ENCODE measurements at regions of chrX and their contacts with region 1.

Region 1: DNA sequence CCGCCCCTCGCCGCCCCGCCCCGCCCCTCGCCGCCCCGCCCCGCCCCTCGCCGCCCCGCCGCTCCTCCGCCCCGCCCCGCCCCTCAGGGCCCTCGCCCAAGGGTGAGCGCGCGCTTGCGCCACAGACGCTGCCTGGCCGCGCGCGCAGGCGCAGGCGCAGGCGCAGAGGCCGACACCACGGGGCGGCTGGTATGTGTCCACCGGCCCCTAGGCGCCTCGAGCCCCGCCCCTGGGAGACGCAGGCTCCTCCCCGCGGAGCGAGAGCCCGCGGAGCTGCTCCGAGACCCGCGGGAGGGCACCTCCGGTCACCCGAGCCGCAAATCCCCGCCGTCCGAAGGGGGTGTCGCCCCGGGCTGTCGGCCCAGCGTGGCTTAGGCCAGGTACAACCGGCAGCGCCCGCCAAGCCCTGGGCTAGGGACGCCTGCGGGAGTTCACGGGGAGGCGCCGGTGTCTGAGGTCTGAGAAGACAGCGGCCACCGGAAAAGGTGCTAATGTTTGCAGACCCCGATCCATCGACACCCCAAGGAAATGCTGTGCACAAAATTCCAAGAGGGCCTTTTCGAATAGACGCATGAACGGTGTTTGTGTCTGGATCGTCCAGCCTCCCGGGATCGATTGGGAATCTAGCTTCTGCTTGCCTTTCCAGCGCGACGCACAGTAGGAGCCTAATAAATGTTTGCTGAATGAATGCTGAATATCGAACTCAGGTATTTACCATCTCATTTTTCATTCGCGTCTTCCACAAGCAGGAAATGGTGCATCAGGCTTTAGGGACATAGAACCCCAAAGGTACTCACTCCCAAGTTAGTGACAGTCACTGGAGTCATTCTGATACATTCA is 473 bp upstream of the CCNQ start:
- DNase-seq: peak; percentile 75 to 89
- ATAC-seq: peak; percentile 76 to 86
- H3K4me3 ChIP-seq: peak overlapping the region; percentile 55 to 65 (median 64)
- H3K27ac ChIP-seq: peak overlapping the region; percentile 73 to 82 (median 80)
- H3K4me1 ChIP-seq: peaks cover 5 to 15% of the 10 kb centered on the region in 2 donors
- H3K27me3 ChIP-seq: no peaks in the 10 kb centered on the region
- CTCF ChIP-seq: no peak
- POLR2A ChIP-seq: no peak

Region 2: DNA sequence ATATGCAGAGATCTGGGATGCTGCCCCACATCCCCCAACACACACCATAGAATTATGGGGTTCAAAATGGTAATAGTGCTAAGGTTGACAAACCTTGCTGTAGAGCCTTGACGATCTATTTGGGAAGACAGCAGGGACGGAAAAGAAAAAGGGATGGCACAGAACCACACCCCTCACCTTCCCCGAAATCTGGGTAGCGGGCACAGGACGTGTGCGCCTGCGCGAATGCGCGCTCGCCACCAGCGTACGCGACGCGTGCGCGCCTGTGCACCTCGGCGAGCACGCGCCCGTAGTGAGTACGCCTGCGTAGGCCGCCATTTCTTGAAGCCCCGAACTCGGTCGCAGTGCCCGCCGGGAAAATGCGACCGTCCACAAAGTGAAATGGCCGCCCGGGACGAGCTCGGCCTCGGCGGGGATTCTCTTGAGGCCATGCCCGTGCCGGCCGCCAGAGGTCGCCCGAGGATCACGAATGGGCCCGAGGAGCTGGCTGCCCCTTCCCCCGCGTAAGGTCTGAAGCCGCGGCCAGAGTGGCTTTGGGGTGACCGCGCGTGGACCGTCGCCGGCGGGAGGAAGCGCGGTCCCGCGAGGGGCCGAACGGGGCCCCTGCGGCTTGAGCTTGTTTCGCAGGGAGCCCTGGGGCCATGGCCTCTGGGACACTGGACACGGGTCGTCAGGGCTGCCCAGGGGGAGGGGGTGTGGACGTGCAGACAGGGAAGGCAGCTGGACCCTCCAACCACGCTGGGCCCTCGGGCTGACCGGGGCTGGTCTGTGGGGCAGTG is 657.9 kb before region 1 on chrX:
- in situ Hi-C with region 1: no loop called
- intact Hi-C with region 1: loop called (anchors 1 kb)
- DNase-seq: peak; percentile 79 to 89
- ATAC-seq: peak; percentile 96 to 97
- H3K4me3 ChIP-seq: peak overlapping the region; percentile 49 to 83 (median 60)
- H3K27ac ChIP-seq: peak overlapping the region; percentile 73 to 92 (median 84)
- H3K4me1 ChIP-seq: peaks cover 0 to 8% of the 10 kb centered on the region in 2 donors
- H3K27me3 ChIP-seq: no peaks in the 10 kb centered on the region
- CTCF ChIP-seq: peak; percentile 75 to 97 (median 85)
- POLR2A ChIP-seq: no peak

Region 3: GRCh38 chrX:153470435-153471363 is 128.7 kb before region 1 on chrX and contains the start of gene HAUS7:
- in situ Hi-C with region 1: no loop called
- intact Hi-C with region 1: loop called (anchors 1 kb)
- DNase-seq: peak; percentile 76 to 86
- ATAC-seq: peak; percentile 87 to 89
- H3K4me3 ChIP-seq: peak within 1 kb of the TSS; percentile 56 to 71 (median 61)
- H3K27ac ChIP-seq: peak within 1 kb of the TSS; percentile 66 to 81 (median 78)
- H3K4me1 ChIP-seq: peaks cover 0 to 9% of the 10 kb centered on the region in 2 donors
- H3K27me3 ChIP-seq: no peaks in the 10 kb centered on the region
- CTCF ChIP-seq: peak; percentile 37 to 69 (median 63)
- POLR2A ChIP-seq: no peak
- total RNA-seq, gene HAUS7: 10.6 to 19.8 (median 13.2) TPM

Region 4: GRCh38 chrX:153724252-153725040 is 125.0 kb after region 1 on chrX and contains the starts of genes ABCD1 and BCAP31:
- in situ Hi-C with region 1: no loop called
- intact Hi-C with region 1: loop called (anchors 5 kb)
- DNase-seq: peak; percentile 84 to 86
- ATAC-seq: peak; percentile 56 to 68
- H3K4me3 ChIP-seq: peak within 1 kb of the TSS; percentile 66 to 75 (median 66)
- H3K27ac ChIP-seq: peak within 1 kb of the TSS; percentile 89 to 95 (median 92)
- H3K4me1 ChIP-seq: peaks cover 31 to 48% of the 10 kb centered on the region in 2 donors
- H3K27me3 ChIP-seq: no peaks in the 10 kb centered on the region
- CTCF ChIP-seq: no peak
- POLR2A ChIP-seq: peak; percentile 80 to 88
- total RNA-seq, gene ABCD1: 19.9 to 54.6 (median 34.5) TPM
- total RNA-seq, gene BCAP31: 41.5 to 91.9 (median 48.3) TPM

Region 5: DNA sequence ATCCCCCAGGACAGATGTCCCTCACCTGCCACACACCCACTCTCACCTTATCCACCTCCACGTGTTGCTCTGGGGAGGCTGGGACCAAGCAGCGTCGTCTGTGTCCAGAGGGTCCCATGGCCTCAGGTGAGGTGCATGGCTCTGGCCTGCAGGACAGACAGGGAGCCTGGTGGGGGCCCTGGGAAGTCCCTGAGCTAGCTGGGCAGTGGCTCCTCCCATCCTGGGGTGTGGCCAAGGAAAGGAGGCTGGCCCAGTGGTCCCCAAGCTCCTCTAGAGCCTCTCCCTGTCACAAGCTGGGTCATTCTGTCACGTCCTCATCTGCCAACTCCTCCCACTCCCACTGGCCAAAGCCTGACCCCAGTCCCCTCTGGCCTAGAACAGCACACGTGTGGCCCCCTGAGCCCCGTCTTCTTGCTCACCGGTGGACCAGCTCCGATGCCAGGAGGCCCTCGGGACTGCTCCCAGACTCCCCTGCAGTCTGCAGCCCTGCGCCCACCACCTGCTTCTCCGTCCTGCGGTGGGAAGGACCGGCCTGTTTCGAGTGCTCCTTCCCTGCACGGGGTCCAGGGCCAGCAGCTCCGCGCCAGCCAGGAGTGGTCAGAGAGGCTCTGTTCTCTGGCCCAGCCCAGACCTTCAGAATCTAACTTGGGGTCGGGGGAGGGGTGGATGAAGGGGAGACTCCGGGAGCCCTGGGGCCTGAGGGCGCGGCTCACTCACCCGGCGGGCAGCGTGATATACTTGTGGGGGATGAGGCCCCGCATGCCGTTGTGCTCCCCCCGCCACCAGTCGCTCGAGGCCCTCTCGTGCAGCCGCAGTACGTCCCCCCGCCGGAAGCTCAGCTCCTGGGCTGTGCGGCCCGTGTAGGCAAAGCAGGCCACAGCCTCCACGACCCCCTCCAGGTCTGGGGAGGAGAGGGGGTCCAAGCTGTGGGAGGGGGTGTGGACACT is 309.9 kb after region 1 on chrX:
- in situ Hi-C with region 1: no loop called
- intact Hi-C with region 1: no loop called
- DNase-seq: no peak
- ATAC-seq: no peak
- H3K4me3 ChIP-seq: no peak overlapping the region
- H3K27ac ChIP-seq: no peak overlapping the region
- H3K4me1 ChIP-seq: no peaks in the 10 kb centered on the region
- H3K27me3 ChIP-seq: no peaks in the 10 kb centered on the region
- CTCF ChIP-seq: no peak
- POLR2A ChIP-seq: no peak

Region 6: GRCh38 chrX:153927922-153928760 is 328.7 kb after region 1 on chrX:
- in situ Hi-C with region 1: no loop called
- intact Hi-C with region 1: loop called (anchors 10 kb)
- DNase-seq: peak; percentile 91 to 96
- ATAC-seq: peak; percentile 89
- H3K4me3 ChIP-seq: peak overlapping the region; percentile 55 to 74 (median 68)
- H3K27ac ChIP-seq: peak overlapping the region; percentile 85 to 97 (median 90)
- H3K4me1 ChIP-seq: peaks cover 10 to 17% of the 10 kb centered on the region in 2 donors
- H3K27me3 ChIP-seq: no peaks in the 10 kb centered on the region
- CTCF ChIP-seq: peak in 4 of 5 experiments; percentile 24 to 27 (median 25)
- POLR2A ChIP-seq: peak; percentile 88 to 92

Region 7: DNA sequence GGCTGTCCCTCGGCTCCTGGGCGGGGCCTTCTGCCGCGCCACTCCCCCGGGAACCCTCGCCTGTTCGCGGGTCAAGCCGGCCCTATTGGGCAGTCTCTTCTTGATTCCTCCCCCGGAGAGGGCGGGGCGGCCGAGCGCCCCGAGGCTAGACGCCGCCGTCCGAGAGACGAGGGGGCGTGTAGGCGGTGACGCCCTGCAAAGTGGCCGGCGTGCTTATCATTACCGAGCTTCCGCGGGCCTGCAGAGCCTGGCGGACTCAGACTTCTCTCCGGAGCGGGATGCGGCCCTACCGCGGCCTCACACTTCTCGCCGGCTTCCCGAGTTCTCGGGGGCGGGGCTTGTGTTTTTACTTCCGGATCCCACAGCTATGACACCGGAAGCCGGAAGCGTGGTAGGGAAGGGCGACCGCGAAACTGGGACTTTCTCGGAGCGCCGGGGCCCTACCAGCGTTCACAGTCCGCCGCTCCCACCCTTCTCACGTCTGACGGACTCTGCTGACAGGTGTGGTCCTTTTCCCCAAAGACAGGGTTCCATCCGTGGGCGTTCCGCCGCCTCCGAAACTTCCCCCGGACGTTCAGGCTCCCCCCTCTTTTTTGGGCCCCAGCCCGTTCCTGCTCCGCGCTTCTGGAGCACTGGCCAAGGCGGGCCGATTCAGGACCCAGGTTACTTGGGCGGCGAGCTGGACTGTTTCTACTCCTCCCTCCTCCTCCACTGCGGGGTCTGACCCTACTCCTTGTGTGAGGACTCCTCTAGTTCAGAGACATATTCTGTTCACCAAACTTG is 948.0 kb after region 1 on chrX and contains the start of gene IKBKG:
- in situ Hi-C with region 1: no loop called
- intact Hi-C with region 1: loop called (anchors 10 kb)
- DNase-seq: peak; percentile 80 to 87
- ATAC-seq: peak; percentile 85 to 87
- H3K4me3 ChIP-seq: peak within 1 kb of the TSS; percentile 61 to 77 (median 69)
- H3K27ac ChIP-seq: peak within 1 kb of the TSS; percentile 84 to 96 (median 92)
- H3K4me1 ChIP-seq: peaks cover 6 to 24% of the 10 kb centered on the region in 2 donors
- H3K27me3 ChIP-seq: no peaks in the 10 kb centered on the region
- CTCF ChIP-seq: no peak
- POLR2A ChIP-seq: peak in 1 of 2 donors; percentile 40
- total RNA-seq, gene IKBKG: 8.8 to 17.5 (median 11.6) TPM